Heart left ventricle (tissue), 16 donors: ENCODE measurements at regions of chr2 and their contacts with region 1.

Region 1: DNA sequence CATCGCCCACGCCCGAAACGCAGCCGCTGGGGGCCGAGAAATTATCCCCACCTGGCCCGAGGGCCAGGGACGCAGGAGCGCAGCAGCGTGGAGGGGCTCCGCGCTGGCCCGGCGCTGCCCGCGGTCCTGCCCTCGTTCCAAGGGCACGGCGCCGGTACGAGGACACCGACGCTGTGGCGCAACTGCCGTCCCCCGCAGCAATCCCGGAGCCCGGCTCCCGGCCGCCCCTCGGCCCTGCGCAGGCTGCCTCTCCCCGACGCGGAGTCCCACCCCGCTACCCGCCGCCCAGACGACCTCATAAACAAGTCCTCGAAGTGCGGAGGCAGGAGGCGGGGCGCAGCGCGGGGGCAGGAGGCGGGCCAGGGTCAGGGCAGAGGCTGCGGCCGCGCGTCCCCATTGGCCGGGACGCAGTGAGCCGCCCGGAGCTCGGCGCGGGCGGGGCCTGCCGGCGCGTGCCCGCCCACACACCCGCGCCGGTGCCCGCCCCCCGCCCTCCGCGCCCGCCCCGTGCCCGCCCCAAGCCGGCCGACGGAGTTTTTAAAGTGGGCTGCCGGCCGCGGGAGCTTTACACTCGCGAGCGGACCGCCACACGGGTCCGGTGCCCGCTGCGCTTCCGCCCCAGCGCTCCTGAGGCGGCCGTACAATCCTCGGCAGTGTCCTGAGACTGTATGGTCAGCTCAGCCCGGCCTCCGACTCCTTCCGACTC is at the start of gene EPAS1:
- DNase-seq: peak; percentile 97 to 98 (median 98)
- ATAC-seq: peak; percentile 80 to 92 (median 85)
- H3K4me3 ChIP-seq: peak within 1 kb of the TSS; percentile 76 to 99 (median 92)
- H3K27ac ChIP-seq: peak within 1 kb of the TSS; percentile 92 to 100 (median 96)
- H3K4me1 ChIP-seq: peaks cover 0 to 42% (median 18%) of the 10 kb centered on the region in 12 donors
- H3K27me3 ChIP-seq: peaks cover 0 to 13% (median 0%) of the 10 kb centered on the region in 9 donors
- CTCF ChIP-seq: no peak
- POLR2A ChIP-seq: peak; percentile 61 to 98
- total RNA-seq, gene EPAS1: 194 to 790 (median 216) TPM

Region 2: GRCh38 chr2:46062637-46063412 is 234.2 kb before region 1 on chr2:
- intact Hi-C with region 1: loop called (anchors 1 to 10 kb)
- DNase-seq: peak in 4 of 5 donors; percentile 84 to 91 (median 88)
- ATAC-seq: peak; percentile 63 to 84 (median 80)
- H3K4me3 ChIP-seq: peak overlapping the region in 2 of 12 donors; percentile 6 to 19
- H3K27ac ChIP-seq: peak overlapping the region in 11 of 12 donors; percentile 33 to 82 (median 69)
- H3K4me1 ChIP-seq: peaks cover 0 to 55% (median 23%) of the 10 kb centered on the region in 12 donors
- H3K27me3 ChIP-seq: no peaks in the 10 kb centered on the region
- CTCF ChIP-seq: peak; percentile 82 to 96 (median 88)
- POLR2A ChIP-seq: no peak

Region 3: DNA sequence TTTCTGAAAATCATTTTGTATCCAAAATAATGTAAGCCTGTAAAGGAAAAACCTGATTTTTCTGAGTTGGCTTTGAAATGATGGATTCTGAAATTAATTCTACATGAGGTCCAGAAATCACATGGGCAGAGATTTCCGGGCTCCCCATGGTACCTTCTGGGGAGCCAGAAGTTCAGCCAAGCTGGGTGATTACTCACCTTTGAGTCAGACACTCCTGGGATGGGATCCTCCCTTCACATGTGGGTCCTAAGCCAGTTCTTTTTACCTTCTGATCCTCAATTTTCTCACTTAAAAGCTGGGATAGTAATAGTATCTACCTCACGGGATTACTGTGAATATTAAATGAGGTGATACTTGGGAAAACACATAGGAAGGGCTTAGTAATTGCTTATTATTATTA is 179.6 kb before region 1 on chr2:
- intact Hi-C with region 1: loop called in 1 of 10 experiments (anchors 2 kb)
- DNase-seq: no peak
- ATAC-seq: peak in 1 of 4 donors; percentile 22
- H3K4me3 ChIP-seq: no peak overlapping the region
- H3K27ac ChIP-seq: peak overlapping the region in 11 of 12 donors; percentile 71 to 90 (median 79)
- H3K4me1 ChIP-seq: peaks cover 4 to 66% (median 54%) of the 10 kb centered on the region in 12 donors
- H3K27me3 ChIP-seq: no peaks in the 10 kb centered on the region
- CTCF ChIP-seq: no peak
- POLR2A ChIP-seq: no peak

Region 4: GRCh38 chr2:46275973-46276372 is 21.0 kb before region 1 on chr2:
- intact Hi-C with region 1: loop called in 2 of 10 experiments (anchors 2 kb)
- DNase-seq: peak; percentile 82 to 87 (median 87)
- ATAC-seq: peak; percentile 57 to 82 (median 76)
- H3K4me3 ChIP-seq: peak overlapping the region in 3 of 12 donors; percentile 7 to 17 (median 11)
- H3K27ac ChIP-seq: peak overlapping the region in 11 of 12 donors; percentile 20 to 82 (median 73)
- H3K4me1 ChIP-seq: peaks cover 11 to 64% (median 46%) of the 10 kb centered on the region in 12 donors
- H3K27me3 ChIP-seq: no peaks in the 10 kb centered on the region
- CTCF ChIP-seq: no peak
- POLR2A ChIP-seq: no peak

Region 5: DNA sequence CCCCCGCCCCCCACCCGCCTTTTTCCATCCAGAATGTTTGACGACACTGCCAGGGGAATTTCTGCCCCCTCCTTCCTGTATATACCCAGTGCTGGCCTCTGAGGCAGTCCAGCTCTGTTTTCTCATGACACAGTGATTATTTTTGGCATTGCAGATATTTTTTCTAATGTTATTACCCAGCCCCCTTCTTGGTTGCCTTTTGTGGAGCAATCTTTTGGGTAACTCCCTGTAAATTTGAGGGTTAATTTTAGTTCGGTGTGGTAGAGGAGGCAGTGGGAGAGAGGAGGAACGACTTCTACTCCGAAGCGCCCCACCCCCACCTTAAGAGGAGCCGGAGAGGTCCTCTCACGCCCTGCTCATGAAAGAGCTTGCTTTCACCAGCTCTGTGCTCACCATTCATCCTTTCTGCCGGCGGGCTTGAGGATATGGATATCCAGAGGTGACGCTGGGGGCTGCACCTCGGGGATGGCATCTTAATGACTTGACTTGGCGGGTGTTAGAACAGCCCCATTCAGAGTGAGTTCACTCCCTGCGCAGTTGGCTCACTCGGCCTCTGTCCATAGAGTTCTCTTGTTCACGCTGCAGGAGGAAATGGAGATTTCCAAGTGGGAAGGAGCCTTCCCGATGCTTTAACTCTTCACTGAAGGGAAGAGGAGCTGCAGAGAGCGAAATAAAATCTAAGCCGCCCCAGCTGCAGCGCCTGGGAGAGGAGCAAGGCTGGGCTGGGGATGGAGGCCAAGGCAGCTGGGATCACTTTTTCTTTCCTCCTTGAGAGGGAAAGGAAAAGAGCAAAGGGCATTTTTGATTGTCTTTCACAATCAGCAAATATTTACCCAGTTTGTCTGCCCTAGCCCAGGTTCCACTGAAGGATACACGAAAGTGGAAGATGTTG is 38.6 kb after region 1 on chr2:
- intact Hi-C with region 1: loop called in 5 of 10 experiments (anchors 5 kb)
- DNase-seq: peak in 4 of 5 donors; percentile 52 to 63 (median 57)
- ATAC-seq: peak; percentile 15 to 46 (median 22)
- H3K4me3 ChIP-seq: peak overlapping the region in 10 of 12 donors; percentile 19 to 52 (median 32)
- H3K27ac ChIP-seq: peak overlapping the region; percentile 59 to 92 (median 80)
- H3K4me1 ChIP-seq: peaks cover 50 to 100% (median 98%) of the 10 kb centered on the region in 12 donors
- H3K27me3 ChIP-seq: no peaks in the 10 kb centered on the region
- CTCF ChIP-seq: no peak
- POLR2A ChIP-seq: no peak

Region 6: DNA sequence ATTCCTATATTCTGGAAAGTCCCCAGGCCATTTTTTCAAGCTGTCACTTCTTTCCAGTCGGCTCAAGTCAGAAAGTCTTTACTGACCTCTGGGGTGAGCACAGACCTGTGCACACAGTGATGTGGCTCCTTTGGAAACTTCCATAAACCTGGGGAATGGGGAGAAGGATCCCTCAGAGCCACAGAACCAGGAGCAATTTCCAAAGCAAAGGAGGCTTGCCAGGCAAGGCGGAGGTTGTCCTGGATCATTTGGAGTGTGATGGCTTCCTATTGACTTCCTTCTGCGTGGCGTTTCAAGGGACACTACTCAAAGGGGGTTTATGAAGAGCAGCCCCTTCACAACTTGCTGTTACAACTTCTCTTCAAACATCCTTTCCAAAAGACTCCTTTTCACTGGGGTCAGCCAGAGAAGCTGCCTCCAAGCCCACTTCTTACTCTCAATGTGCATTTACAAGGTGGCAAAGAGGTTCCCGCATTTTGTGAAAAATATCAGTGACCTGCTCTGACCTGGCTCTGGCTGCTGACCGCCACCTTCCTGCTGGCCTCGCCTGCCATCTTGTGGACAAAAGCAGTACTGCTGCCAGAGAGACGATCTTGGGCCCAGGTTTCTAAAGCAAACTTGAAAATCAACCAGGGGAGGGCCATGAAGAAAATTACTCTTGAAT is 164.2 kb after region 1 on chr2:
- intact Hi-C with region 1: loop called in 3 of 10 experiments (anchors 2 kb)
- DNase-seq: peak; percentile 69 to 87 (median 78)
- ATAC-seq: peak; percentile 34 to 75 (median 58)
- H3K4me3 ChIP-seq: no peak overlapping the region
- H3K27ac ChIP-seq: peak overlapping the region; percentile 30 to 74 (median 58)
- H3K4me1 ChIP-seq: peaks cover 7 to 40% (median 20%) of the 10 kb centered on the region in 12 donors
- H3K27me3 ChIP-seq: no peaks in the 10 kb centered on the region
- CTCF ChIP-seq: peak; percentile 98 to 100 (median 99)
- POLR2A ChIP-seq: no peak